Breast epithelium (tissue), 4 donors: ENCODE measurements at regions of chr11 and their contacts with region 1.

Region 1: DNA sequence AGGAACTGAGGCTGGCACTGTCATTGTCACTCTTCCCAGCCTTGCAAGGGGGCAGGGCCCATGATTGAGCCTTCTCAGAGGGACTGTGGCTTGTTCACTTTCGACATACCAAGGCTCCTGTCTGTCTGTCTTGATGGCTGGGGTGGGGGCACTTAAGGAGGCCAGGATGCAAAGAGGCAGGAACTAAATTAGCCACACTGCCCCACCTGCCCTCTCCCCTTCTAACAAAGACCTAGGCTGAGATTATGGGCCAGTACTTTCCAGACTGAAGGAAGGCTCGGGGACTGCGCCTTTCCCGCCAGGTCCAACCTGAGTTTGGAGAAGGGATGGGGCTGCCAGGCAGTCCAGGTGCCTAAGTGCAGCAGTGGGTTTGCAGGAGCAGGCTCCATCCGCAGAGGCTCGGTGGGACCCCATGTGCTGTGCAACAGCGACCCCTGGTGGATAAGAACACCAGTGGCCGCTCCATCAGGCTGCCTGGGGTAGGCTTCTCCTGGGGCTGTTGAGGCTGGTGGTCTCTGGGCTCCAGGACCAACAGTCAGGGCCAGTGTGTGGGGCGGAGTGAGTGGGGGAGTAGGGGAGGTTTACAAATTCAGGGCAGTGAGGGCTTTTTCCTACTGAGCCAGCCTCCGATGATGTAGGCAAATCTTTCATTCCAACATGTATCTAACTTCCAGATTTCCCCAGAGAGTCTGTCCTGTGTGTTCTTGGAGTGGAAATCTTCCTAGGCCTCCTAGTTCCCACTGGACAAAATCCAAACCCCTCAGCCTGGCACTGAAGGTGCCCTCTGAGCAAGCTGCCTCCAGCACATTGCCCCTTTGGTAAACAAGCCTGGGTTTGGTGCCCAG is 93.9 kb downstream of the INSC start:
- DNase-seq: peak; percentile 40 to 69
- H3K4me3 ChIP-seq: no peak overlapping the region
- H3K27ac ChIP-seq: no peak overlapping the region
- H3K4me1 ChIP-seq: no peaks in the 10 kb centered on the region
- H3K27me3 ChIP-seq: no peaks in the 10 kb centered on the region
- CTCF ChIP-seq: peak; percentile 24 to 89 (median 84)
- POLR2A ChIP-seq: no peak

Region 2: GRCh38 chr11:15101072-15101709 is 107.4 kb before region 1 on chr11:
- intact Hi-C with region 1: loop called (anchors 10 kb)
- DNase-seq: no peak
- H3K4me3 ChIP-seq: no peak overlapping the region
- H3K27ac ChIP-seq: no peak overlapping the region
- H3K4me1 ChIP-seq: no peaks in the 10 kb centered on the region
- H3K27me3 ChIP-seq: no peaks in the 10 kb centered on the region
- CTCF ChIP-seq: peak; percentile 30 to 79 (median 69)
- POLR2A ChIP-seq: no peak

Region 3: DNA sequence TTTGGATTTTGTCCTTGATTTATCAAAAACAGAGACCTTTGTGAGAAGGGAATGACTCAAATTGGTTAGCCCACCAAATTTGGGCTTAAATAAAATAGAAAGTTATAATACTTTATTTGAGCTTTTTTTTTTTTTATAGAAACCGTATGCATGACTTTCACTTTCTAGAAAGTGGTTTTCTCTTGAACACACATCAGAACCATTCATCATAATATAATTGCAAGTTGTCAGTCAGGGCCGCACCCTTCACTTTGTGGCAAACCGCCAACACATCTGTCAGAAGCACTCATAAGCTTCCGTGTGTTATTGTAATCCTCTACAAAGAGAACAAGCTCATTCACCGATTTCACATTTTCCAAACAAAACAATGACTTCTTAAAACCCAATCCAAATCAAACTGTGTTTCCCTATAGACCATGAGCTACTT is 1071.7 kb after region 1 on chr11:
- intact Hi-C with region 1: no loop called
- DNase-seq: no peak
- H3K4me3 ChIP-seq: no peak overlapping the region
- H3K27ac ChIP-seq: no peak overlapping the region
- H3K4me1 ChIP-seq: no peaks in the 10 kb centered on the region
- H3K27me3 ChIP-seq: no peaks in the 10 kb centered on the region
- CTCF ChIP-seq: no peak
- POLR2A ChIP-seq: no peak